ENCODE measurements at regions of chr7 and their contacts with region 1.

Region 1: GRCh38 chr7:25851332-25852210 is 300.4 kb upstream of the NFE2L3 start:
- DNase-seq: peak; percentile 73 to 75
- H3K4me3 ChIP-seq: peak overlapping the region; percentile 17 to 67 (median 39)
- H3K27ac ChIP-seq: peak overlapping the region; percentile 62 to 81
- H3K4me1 ChIP-seq: peaks cover 0 to 9% of the 10 kb centered on the region in 2 donors
- H3K27me3 ChIP-seq: peaks cover 7 to 62% of the 10 kb centered on the region in 2 donors
- CTCF ChIP-seq: peak; percentile 75 to 83 (median 79)
- POLR2A ChIP-seq: no peak

Region 2: DNA sequence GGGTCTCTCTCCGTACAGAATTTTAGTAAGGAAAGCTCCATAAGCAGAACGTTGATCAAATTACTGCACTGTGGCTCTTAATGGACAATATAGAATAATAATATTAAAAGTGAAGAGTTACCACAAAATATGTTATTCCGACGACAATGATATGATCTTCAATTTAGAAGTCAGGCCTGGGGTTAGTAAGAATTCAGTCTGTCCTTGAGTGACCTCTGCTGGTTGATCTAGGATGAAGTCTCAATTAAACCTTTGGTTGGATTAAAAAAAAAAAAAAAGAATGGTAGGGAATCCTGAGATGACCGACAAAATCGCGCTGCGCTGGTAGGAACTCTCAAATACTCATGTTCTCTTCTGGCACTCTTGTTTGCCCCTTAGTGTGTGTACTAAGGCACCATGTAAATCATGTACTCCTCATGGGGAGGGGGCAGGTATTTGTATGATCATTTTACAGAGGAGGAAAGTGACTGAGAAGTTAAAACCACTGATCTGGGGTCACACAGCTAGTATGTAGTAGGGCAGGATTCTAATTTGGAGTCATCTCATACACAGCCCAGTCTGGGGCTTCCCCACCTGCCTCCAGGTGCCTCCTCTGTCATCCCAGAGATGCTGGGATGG is 462.0 kb before region 1 on chr7:
- intact Hi-C with region 1: loop called (anchors 10 kb)
- DNase-seq: no peak
- H3K4me3 ChIP-seq: no peak overlapping the region
- H3K27ac ChIP-seq: no peak overlapping the region
- H3K4me1 ChIP-seq: peaks cover 7 to 11% of the 10 kb centered on the region in 2 donors
- H3K27me3 ChIP-seq: peaks cover 0 to 7% of the 10 kb centered on the region in 2 donors
- CTCF ChIP-seq: peak; percentile 59 to 62 (median 60)
- POLR2A ChIP-seq: no peak

Region 3: GRCh38 chr7:25669961-25670841 is 181.4 kb before region 1 on chr7:
- intact Hi-C with region 1: loop called (anchors 5 kb)
- DNase-seq: peak in 1 of 2 donors; percentile 66
- H3K4me3 ChIP-seq: no peak overlapping the region
- H3K27ac ChIP-seq: peak overlapping the region; percentile 38 to 40
- H3K4me1 ChIP-seq: no peaks in the 10 kb centered on the region
- H3K27me3 ChIP-seq: no peaks in the 10 kb centered on the region
- CTCF ChIP-seq: no peak
- POLR2A ChIP-seq: no peak

Region 4: GRCh38 chr7:25951031-25951948 is 99.7 kb after region 1 on chr7:
- intact Hi-C with region 1: no loop called
- DNase-seq: peak; percentile 94 to 95
- H3K4me3 ChIP-seq: peak overlapping the region; percentile 58 to 88 (median 86)
- H3K27ac ChIP-seq: peak overlapping the region; percentile 85 to 89
- H3K4me1 ChIP-seq: no peaks in the 10 kb centered on the region
- H3K27me3 ChIP-seq: no peaks in the 10 kb centered on the region
- CTCF ChIP-seq: no peak
- POLR2A ChIP-seq: peak; percentile 90

Region 5: GRCh38 chr7:27179503-27180430 is 1328.2 kb after region 1 on chr7:
- intact Hi-C with region 1: loop called (anchors 10 kb)
- DNase-seq: peak in 1 of 2 donors; percentile 56
- H3K4me3 ChIP-seq: peak overlapping the region in 2 of 3 donors; percentile 25 to 50
- H3K27ac ChIP-seq: no peak overlapping the region
- H3K4me1 ChIP-seq: peaks cover 0 to 11% of the 10 kb centered on the region in 2 donors
- H3K27me3 ChIP-seq: peaks cover 16 to 88% of the 10 kb centered on the region in 2 donors
- CTCF ChIP-seq: peak; percentile 26 to 68 (median 66)
- POLR2A ChIP-seq: no peak

Measured in breast epithelium (tissue), 4 donors.